Aorta (tissue), 5 donors: ENCODE measurements at regions of chr1 and their contacts with region 1.

Region 1: GRCh38 chr1:164558461-164559341 is at the start of gene PBX1:
- DNase-seq: peak; percentile 97 to 98
- ATAC-seq: peak; percentile 98
- H3K4me3 ChIP-seq: peak within 1 kb of the TSS; percentile 95 to 96
- H3K27ac ChIP-seq: peak within 1 kb of the TSS; percentile 51 to 76
- H3K4me1 ChIP-seq: peaks cover 0 to 2% of the 10 kb centered on the region in 2 donors
- H3K27me3 ChIP-seq: no peaks in the 10 kb centered on the region
- total RNA-seq, gene PBX1: 61.8 to 125 TPM

Region 2: GRCh38 chr1:164433141-164433817 is 125.4 kb before region 1 on chr1:
- intact Hi-C with region 1: loop called in 1 of 2 experiments (anchors 10 kb)
- DNase-seq: no peak
- ATAC-seq: no peak
- H3K4me3 ChIP-seq: no peak overlapping the region
- H3K27ac ChIP-seq: no peak overlapping the region
- H3K4me1 ChIP-seq: peaks cover 0 to 2% of the 10 kb centered on the region in 2 donors
- H3K27me3 ChIP-seq: no peaks in the 10 kb centered on the region

Region 3: GRCh38 chr1:164524810-164525209 is 33.9 kb before region 1 on chr1:
- intact Hi-C with region 1: loop called in 1 of 2 experiments (anchors 1 kb)
- DNase-seq: no peak
- ATAC-seq: no peak
- H3K4me3 ChIP-seq: no peak overlapping the region
- H3K27ac ChIP-seq: no peak overlapping the region
- H3K4me1 ChIP-seq: peaks cover 0 to 1% of the 10 kb centered on the region in 2 donors
- H3K27me3 ChIP-seq: no peaks in the 10 kb centered on the region

Region 4: GRCh38 chr1:164858101-164858632 is 299.5 kb after region 1 on chr1:
- intact Hi-C with region 1: no loop called
- DNase-seq: no peak
- ATAC-seq: no peak
- H3K4me3 ChIP-seq: no peak overlapping the region
- H3K27ac ChIP-seq: no peak overlapping the region
- H3K4me1 ChIP-seq: peaks cover 0 to 2% of the 10 kb centered on the region in 2 donors
- H3K27me3 ChIP-seq: no peaks in the 10 kb centered on the region